HepG2 (cell line): ENCODE measurements at regions of chr11 and their contacts with region 1.

Region 1: GRCh38 chr11:64185816-64186498 is at the start of gene STIP1:
- DNase-seq: peak; percentile 100
- ATAC-seq: peak; percentile 92
- H3K4me3 ChIP-seq: peak within 1 kb of the TSS; percentile 60 to 75 (median 60)
- H3K27ac ChIP-seq: peak within 1 kb of the TSS; percentile 83
- H3K4me1 ChIP-seq: peaks cover 51% of the 10 kb centered on the region
- H3K27me3 ChIP-seq: no peaks in the 10 kb centered on the region
- CTCF ChIP-seq: peak; percentile 60
- EP300 ChIP-seq: peak in 1 of 2 experiments; percentile 62; a peak in 2 of 4 replicates
- POLR2A ChIP-seq: peak in 1 of 2 experiments; percentile 82; a peak in 2 of 4 replicates
- RAD21 ChIP-seq: no peak; the same call in 1 of the 2 replicates
- total RNA-seq, gene STIP1: 217 and 245 TPM in 2 replicates

Region 2: DNA sequence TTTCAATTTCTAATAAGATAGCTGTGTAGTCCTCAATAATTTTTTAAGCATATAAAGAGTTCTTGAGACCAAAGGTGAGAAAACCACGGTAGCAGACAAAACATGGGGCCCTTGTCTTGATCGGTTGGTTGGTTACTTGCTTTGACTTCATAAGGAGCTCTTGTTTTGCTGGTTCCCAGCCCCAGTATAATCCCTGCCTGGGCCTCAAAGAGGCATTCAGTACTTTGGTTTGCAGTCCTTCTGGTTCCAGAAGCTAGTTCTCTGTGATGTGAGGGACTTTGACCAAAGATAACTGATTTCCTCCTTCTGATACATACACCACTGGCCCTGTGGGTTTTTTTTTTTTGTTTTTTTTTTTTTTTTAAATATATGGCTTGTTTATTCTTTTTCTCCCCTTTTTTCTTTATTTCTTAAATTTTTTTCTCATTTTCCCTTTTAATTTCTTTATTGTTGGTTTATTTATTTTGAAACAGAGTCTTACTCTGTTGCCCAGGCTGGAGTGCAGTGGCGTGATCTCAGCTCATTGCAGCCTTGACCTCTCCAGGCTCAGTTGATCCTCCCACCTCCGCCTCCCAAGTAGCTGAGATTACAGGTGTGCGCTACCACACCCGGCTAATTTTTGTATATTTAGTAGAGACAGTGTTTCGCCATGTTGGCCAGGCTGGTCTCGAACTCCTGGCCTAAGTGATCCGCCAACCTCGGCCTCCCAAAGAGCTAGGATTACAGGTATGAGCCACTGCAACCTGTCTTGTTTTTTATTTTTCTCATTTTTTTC is 329.8 kb before region 1 on chr11:
- CTCF ChIA-PET with region 1: no interaction called
- POLR2A ChIA-PET with region 1: no interaction called
- in situ Hi-C with region 1: no loop called
- intact Hi-C with region 1: no loop called
- DNase-seq: peak; percentile 68
- ATAC-seq: peak; percentile 74
- H3K4me3 ChIP-seq: no peak overlapping the region
- H3K27ac ChIP-seq: peak overlapping the region; percentile 65
- H3K4me1 ChIP-seq: peaks cover 55% of the 10 kb centered on the region
- H3K27me3 ChIP-seq: no peaks in the 10 kb centered on the region
- CTCF ChIP-seq: no peak
- EP300 ChIP-seq: peak in 1 of 2 experiments; percentile 37; a peak in 1 of 4 replicates
- POLR2A ChIP-seq: no peak
- RAD21 ChIP-seq: no peak

Region 3: DNA sequence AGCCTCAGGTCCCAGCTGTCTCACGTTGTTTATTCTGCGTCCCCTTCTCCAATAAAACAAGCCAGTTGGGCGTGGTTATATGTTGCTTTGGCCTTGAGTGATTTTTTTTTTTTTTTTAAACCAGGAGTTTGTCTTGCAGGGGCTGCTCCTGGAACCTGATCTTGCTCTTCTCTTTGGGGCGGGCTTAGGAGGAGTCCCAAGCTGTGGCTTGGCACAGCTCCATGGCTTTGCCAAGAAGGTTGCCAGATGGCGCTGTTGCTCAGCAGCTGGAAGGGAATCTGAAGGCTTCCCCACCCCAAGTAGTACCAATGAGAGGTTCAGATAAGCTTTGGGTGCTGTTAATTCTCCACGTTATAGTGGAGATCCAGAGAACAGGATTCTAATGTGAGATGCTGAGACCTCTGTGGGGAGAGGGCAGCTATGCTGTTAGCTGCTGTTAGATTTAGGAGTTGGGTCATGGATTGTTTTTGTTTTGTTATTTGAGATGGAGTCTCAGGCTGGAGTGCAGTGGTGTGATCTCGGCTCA is 18.6 kb after region 1 on chr11:
- CTCF ChIA-PET with region 1: no interaction called
- POLR2A ChIA-PET with region 1: interaction called, 18 read pairs
- in situ Hi-C with region 1: no loop called
- intact Hi-C with region 1: no loop called
- DNase-seq: peak; percentile 59
- ATAC-seq: peak; percentile 25
- H3K4me3 ChIP-seq: no peak overlapping the region
- H3K27ac ChIP-seq: no peak overlapping the region
- H3K4me1 ChIP-seq: peaks cover 17% of the 10 kb centered on the region
- H3K27me3 ChIP-seq: no peaks in the 10 kb centered on the region
- CTCF ChIP-seq: peak; percentile 83
- EP300 ChIP-seq: no peak
- POLR2A ChIP-seq: no peak
- RAD21 ChIP-seq: peak; percentile 68

Region 4: DNA sequence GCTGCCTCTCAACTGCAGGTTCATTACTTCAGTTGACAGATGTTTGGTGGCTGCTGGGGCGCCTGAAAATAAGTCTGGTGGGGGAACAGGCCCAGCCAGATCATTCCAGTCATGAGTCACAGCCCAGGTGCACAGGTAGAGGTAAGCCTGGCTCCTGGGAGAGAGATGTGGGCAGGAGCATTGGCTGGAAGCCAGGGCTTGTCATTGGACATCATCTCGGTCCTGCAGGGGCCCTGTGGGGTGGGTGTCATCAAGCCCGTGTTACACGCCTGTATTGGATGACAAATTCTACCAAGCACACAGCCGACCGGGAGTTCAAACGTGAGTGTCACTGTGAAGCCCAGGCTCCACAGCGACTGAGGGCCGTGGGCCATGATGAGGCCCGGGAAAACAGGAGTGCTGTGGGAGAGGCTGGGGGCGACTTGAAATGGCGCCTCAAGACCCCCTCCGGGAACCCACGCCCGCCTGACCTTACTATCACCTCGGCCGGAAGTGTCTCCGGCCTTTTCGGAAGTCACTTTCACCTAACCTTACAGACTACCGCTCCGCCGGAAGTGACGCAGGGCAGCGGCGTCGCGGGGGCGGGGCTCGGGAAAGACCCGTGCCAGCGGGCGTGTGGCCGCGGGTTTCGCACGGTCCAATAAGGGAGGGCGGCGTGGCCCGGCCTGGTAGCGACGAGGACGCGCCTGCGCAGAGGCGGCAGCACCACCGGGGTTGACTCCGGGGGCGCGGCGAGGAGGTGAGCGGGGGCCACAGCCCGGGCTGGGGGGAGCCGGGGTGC is 54.6 kb after region 1 on chr11 and contains the start of gene FKBP2:
- CTCF ChIA-PET with region 1: no interaction called
- POLR2A ChIA-PET with region 1: interaction called, 21 read pairs
- in situ Hi-C with region 1: no loop called
- intact Hi-C with region 1: loop called (anchors 5 kb)
- DNase-seq: peak; percentile 93
- ATAC-seq: peak; percentile 46
- H3K4me3 ChIP-seq: peak within 1 kb of the TSS; percentile 84 to 93 (median 88)
- H3K27ac ChIP-seq: peak within 1 kb of the TSS; percentile 91
- H3K4me1 ChIP-seq: peaks cover 67% of the 10 kb centered on the region
- H3K27me3 ChIP-seq: no peaks in the 10 kb centered on the region; a peak in 1 of 5 replicates
- CTCF ChIP-seq: no peak
- EP300 ChIP-seq: no peak
- POLR2A ChIP-seq: peak in 1 of 2 experiments; percentile 88; a peak in 2 of 4 replicates
- RAD21 ChIP-seq: no peak
- total RNA-seq, gene FKBP2: 29.4 and 53.3 TPM in 2 replicates

Region 5: DNA sequence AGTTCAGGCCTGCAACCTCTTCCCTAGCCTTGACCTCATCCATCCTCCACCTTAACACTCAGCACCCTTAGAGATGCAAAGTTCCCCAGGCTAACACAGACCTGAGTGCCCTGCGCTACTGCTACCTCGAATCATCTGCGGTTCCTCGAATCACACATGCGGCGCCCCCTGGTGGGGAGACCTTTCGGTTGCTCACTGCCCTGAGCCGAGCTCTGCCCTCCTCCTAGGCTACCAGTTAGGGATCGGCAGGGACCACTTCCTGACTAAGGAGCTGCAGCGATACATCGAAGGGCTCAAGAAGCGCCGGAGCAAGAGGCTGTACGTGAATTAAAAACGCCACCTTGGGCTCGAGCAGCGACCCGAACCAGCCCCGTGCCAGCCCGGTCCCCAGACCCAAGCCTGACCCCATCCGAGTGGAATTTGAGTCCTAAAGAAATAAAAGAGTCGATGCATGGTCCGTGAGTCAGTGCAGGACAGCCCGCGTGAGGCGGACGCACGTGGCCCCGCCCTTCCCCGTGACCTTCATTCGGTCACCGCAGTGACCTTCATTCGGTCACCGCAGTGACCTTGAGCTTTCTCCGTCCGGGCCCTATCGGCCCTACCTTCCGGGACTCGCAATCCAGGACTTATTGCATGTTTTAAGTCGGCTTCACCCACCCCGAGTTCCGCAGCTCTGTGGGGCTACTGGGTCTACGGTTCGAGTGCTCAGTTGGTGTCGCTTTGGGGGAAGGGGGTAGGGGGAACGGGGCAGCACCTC is 118.5 kb after region 1 on chr11:
- CTCF ChIA-PET with region 1: no interaction called
- POLR2A ChIA-PET with region 1: interaction called, 19 read pairs
- in situ Hi-C with region 1: no loop called
- intact Hi-C with region 1: loop called (anchors 10 kb)
- DNase-seq: peak; percentile 80
- ATAC-seq: peak; percentile 55
- H3K4me3 ChIP-seq: peak overlapping the region; percentile 51 to 79 (median 70)
- H3K27ac ChIP-seq: peak overlapping the region; percentile 94
- H3K4me1 ChIP-seq: peaks cover 66% of the 10 kb centered on the region
- H3K27me3 ChIP-seq: peaks cover 3 to 13% of the 10 kb centered on the region in 2 experiments; a peak in 4 of 5 replicates
- CTCF ChIP-seq: peak; percentile 95
- EP300 ChIP-seq: no peak
- POLR2A ChIP-seq: peak in 1 of 2 experiments; percentile 62; a peak in 2 of 4 replicates
- RAD21 ChIP-seq: peak; percentile 48; the same call in 1 of the 2 replicates